WTC11 (cell line): ENCODE measurements at regions of chr5 and their contacts with region 1.

Region 1: DNA sequence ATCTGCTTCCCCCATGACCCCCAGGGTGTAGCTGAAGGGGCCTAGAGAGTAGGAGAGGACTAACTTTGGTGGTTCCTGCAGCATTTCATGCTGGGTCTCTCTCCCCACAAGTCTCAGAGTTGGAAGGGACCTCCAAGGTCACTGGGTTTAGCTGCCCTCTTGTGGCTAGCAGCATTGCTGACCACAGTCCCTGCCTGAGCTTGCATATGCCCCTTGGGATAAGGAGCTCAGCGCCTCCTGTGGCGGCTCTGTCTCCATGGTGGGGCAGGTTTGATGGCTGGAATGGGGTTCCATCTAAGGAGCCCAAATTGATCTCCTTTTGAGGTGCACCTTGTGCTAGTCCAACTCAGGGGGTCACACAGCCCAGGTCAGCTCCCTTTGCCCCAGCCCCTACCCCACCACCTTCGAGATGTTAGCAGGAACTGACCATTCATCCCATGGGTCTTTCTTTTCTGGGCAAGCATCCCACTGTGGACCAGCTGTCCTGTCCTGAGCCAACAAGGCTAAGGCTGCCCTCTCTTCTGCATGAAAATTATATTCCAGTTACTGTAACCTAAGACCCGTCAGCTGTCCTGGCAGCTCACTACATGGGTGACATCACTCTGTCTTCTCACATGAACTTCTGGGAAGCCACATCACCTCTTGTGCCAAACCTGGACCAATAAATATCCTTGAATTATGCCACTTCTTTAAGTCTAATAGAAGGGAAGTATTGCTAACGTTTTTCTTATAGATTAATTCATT is 196.2 kb downstream of the HSPA4 start:
- DNase-seq: peak; percentile 77
- ATAC-seq: peak; percentile 85
- H3K4me3 Mint-ChIP-seq: no peak overlapping the region
- H3K27ac Mint-ChIP-seq: no peak overlapping the region
- H3K4me1 Mint-ChIP-seq: peaks cover 7% of the 10 kb centered on the region
- H3K27me3 Mint-ChIP-seq: no peaks in the 10 kb centered on the region
- CTCF ChIP-seq: peak; percentile 15; the same call in 1 of the 2 replicates

Region 2: GRCh38 chr5:133063965-133064364 is 184.1 kb before region 1 on chr5:
- CTCF ChIA-PET with region 1: no interaction called
- POLR2A ChIA-PET with region 1: no interaction called
- DNase-seq: no peak
- ATAC-seq: no peak
- H3K4me3 Mint-ChIP-seq: no peak overlapping the region
- H3K27ac Mint-ChIP-seq: no peak overlapping the region
- H3K4me1 Mint-ChIP-seq: peaks cover 27% of the 10 kb centered on the region
- H3K27me3 Mint-ChIP-seq: no peaks in the 10 kb centered on the region
- CTCF ChIP-seq: no peak

Region 3: DNA sequence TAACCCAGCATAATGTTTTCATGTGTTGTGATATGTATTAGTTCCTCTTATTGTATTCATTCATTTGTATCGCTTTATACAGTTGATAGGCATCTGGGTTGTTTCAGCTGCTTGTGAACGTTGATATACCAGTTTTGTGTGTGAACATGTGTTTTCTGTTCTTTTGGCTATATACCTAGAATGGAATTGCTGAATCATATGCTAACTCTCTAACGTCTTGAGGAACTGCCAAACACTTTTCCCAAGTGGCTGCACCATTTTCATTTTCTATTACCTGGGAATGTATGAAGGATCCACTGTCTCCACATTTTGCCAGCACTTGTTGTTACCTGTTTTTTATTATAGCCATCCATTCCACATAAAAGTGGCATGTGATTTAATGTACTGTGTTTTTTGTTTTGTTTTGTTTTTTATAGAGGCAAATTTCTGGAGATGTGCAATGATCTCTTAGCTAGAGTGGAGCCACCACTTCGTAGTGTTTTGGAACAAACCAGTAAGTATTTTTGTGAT is 161.6 kb before region 1 on chr5:
- CTCF ChIA-PET with region 1: no interaction called
- POLR2A ChIA-PET with region 1: no interaction called
- DNase-seq: no peak
- ATAC-seq: no peak
- H3K4me3 Mint-ChIP-seq: no peak overlapping the region
- H3K27ac Mint-ChIP-seq: no peak overlapping the region; the same call in 1 of the 2 replicates
- H3K4me1 Mint-ChIP-seq: no peaks in the 10 kb centered on the region
- H3K27me3 Mint-ChIP-seq: no peaks in the 10 kb centered on the region
- CTCF ChIP-seq: no peak

Region 4: GRCh38 chr5:133111299-133111698 is 136.8 kb before region 1 on chr5:
- CTCF ChIA-PET with region 1: interaction called, 68 read pairs
- POLR2A ChIA-PET with region 1: no interaction called
- DNase-seq: peak; percentile 85
- ATAC-seq: peak; percentile 80
- H3K4me3 Mint-ChIP-seq: no peak overlapping the region
- H3K27ac Mint-ChIP-seq: no peak overlapping the region
- H3K4me1 Mint-ChIP-seq: peaks cover 3% of the 10 kb centered on the region; the same call in 1 of the 2 replicates
- H3K27me3 Mint-ChIP-seq: no peaks in the 10 kb centered on the region; the same call in 1 of the 2 replicates
- CTCF ChIP-seq: peak; percentile 92

Region 5: DNA sequence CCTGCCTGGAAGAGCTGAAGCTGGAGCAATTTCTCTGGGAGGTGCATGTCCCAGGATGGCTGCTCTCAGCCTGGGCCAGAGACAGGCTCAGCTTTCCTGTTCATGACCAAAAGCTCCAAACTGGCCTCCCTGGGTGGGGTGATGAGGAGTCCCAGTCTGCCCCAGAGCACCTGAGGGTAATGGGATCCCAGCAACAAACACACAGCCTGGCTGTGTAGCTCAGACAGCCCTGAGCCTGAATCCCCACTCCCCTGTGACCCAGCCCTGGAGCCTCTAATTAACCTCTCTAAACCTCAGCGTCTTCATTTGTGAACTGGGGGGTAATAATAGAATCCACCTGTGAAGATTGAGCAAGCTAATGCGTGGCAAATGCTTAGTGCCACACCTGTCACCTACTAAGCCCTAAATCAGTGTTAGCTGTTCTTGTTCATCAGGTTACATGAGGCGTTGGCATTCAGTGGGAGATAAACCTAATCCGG is 128.8 kb before region 1 on chr5:
- CTCF ChIA-PET with region 1: interaction called, 68 read pairs
- POLR2A ChIA-PET with region 1: no interaction called
- DNase-seq: no peak
- ATAC-seq: no peak
- H3K4me3 Mint-ChIP-seq: no peak overlapping the region
- H3K27ac Mint-ChIP-seq: no peak overlapping the region
- H3K4me1 Mint-ChIP-seq: no peaks in the 10 kb centered on the region
- H3K27me3 Mint-ChIP-seq: peaks cover 2% of the 10 kb centered on the region; the same call in 1 of the 2 replicates
- CTCF ChIP-seq: no peak

Region 6: GRCh38 chr5:133225671-133226152 is 22.3 kb before region 1 on chr5:
- CTCF ChIA-PET with region 1: interaction called, 14 read pairs
- POLR2A ChIA-PET with region 1: no interaction called
- DNase-seq: no peak
- ATAC-seq: no peak
- H3K4me3 Mint-ChIP-seq: no peak overlapping the region
- H3K27ac Mint-ChIP-seq: no peak overlapping the region
- H3K4me1 Mint-ChIP-seq: peaks cover 6% of the 10 kb centered on the region; the same call in 1 of the 2 replicates
- H3K27me3 Mint-ChIP-seq: no peaks in the 10 kb centered on the region
- CTCF ChIP-seq: no peak

Region 7: DNA sequence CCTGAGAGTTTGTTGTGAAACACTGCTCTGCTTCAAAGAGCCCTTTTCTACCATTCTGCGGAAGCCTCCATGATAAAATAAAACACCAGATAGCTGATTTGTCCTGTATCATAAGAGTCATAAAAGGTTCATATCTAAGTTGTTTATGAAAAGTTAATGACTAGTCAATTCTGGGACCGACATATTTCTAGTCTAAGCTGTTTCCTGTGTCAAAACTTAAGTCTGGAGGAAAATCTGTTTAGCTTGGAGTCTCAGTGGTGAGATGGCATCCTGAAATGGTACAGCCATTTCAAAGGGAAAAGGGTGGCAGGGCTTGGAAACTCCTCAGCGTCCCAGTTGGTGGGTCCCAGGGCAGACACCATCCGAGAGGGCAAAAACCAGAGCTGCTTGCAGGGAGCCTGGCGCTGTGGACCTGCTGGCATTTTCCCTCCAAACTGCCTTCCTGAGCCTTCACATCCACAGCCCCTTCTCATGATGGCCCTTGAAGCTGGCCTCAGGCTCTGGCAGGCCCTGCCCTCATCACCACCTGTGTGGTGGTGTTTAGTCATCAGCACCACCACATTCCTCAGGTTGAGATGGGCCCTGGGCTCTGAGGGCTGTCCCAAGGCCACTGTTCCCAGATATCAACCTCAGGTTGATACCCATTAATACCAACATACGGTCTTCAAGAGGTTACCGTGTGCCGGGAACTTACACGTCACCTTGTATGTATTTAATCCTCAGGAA is 12.2 kb before region 1 on chr5:
- CTCF ChIA-PET with region 1: interaction called, 14 read pairs
- POLR2A ChIA-PET with region 1: interaction called, 3 read pairs
- DNase-seq: no peak
- ATAC-seq: no peak
- H3K4me3 Mint-ChIP-seq: no peak overlapping the region
- H3K27ac Mint-ChIP-seq: no peak overlapping the region
- H3K4me1 Mint-ChIP-seq: 0 out of 2 replicates have a peak, but pooled peaks cover 4% of the 10 kb centered on the region
- H3K27me3 Mint-ChIP-seq: no peaks in the 10 kb centered on the region
- CTCF ChIP-seq: no peak

Region 8: DNA sequence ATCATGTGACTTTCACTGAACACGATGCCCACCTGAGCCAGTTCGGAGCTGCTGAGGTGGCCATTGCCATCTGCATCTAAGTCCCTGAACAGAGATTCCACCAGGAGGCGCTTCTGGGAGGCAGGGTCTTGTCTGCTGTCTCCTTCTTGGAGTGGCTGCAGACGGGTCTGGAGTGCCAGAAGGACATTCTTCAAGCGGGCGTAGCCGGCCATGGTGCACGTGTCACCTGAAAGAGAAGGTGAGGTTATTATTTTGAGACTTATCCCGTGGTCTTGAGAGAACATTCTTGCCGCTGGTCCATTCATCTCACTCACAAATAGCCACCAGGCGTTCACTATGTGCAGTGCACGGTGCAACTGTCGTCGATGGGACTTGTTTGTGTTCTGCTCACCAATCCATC is 68.4 kb after region 1 on chr5:
- CTCF ChIA-PET with region 1: interaction called, 14 read pairs
- POLR2A ChIA-PET with region 1: no interaction called
- DNase-seq: peak; percentile 74
- ATAC-seq: peak; percentile 81
- H3K4me3 Mint-ChIP-seq: no peak overlapping the region
- H3K27ac Mint-ChIP-seq: no peak overlapping the region
- H3K4me1 Mint-ChIP-seq: peaks cover 31% of the 10 kb centered on the region
- H3K27me3 Mint-ChIP-seq: no peaks in the 10 kb centered on the region; the same call in 1 of the 2 replicates
- CTCF ChIP-seq: no peak

Region 9: GRCh38 chr5:133341915-133342710 is 94.1 kb after region 1 on chr5:
- CTCF ChIA-PET with region 1: interaction called, 11 read pairs
- POLR2A ChIA-PET with region 1: no interaction called
- DNase-seq: peak; percentile 29
- ATAC-seq: peak; percentile 68
- H3K4me3 Mint-ChIP-seq: no peak overlapping the region
- H3K27ac Mint-ChIP-seq: no peak overlapping the region
- H3K4me1 Mint-ChIP-seq: peaks cover 63% of the 10 kb centered on the region
- H3K27me3 Mint-ChIP-seq: peaks cover 21% of the 10 kb centered on the region
- CTCF ChIP-seq: no peak

Region 10: GRCh38 chr5:133508845-133509741 is 261.0 kb after region 1 on chr5:
- CTCF ChIA-PET with region 1: no interaction called
- POLR2A ChIA-PET with region 1: no interaction called
- DNase-seq: no peak
- ATAC-seq: no peak; the same call in 1 of the 2 replicates
- H3K4me3 Mint-ChIP-seq: no peak overlapping the region
- H3K27ac Mint-ChIP-seq: no peak overlapping the region
- H3K4me1 Mint-ChIP-seq: peaks cover 6% of the 10 kb centered on the region
- H3K27me3 Mint-ChIP-seq: no peaks in the 10 kb centered on the region
- CTCF ChIP-seq: no peak

Region 11: GRCh38 chr5:133552931-133553525 is 305.0 kb after region 1 on chr5:
- CTCF ChIA-PET with region 1: no interaction called
- POLR2A ChIA-PET with region 1: no interaction called
- DNase-seq: peak; percentile 79
- ATAC-seq: peak; percentile 99
- H3K4me3 Mint-ChIP-seq: no peak overlapping the region
- H3K27ac Mint-ChIP-seq: no peak overlapping the region
- H3K4me1 Mint-ChIP-seq: peaks cover 18% of the 10 kb centered on the region
- H3K27me3 Mint-ChIP-seq: no peaks in the 10 kb centered on the region
- CTCF ChIP-seq: peak; percentile 79